HCT116 (cell line): ENCODE measurements at regions of chr4 and their contacts with region 1.

Region 1: DNA sequence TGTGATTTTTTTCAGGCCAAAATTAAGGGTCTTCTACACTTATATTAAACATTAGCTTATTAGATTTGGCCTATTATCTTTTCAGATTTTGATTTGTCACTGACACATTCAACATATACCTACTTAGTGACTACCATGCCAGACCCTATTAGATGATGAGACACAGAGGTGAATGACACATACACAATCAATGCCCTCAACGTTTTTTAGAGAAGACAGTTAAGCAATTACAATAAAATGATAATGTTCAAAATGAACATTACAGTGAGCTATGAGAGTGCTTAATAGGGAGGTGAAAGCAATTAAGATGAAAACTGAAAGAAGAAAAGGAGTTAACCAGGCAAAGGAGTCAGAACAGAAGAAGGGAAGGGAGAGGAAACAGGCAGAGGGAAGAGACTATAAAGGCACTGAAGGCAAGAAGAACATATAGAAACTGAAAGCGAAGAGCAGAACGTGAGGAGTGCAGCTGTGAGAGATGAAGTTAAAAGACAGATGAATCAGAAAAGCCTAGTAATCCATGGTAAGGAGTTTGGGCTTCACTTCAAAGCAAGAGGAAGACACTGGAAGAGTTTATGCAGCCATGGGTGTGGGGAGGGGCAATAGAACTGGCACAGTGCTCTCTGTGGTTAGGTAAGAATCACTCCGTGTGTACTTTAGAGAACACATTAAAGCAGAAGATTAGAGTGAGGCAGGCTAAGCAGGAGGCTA is 119.0 kb downstream of the REELD1 start:
- DNase-seq: no peak
- ATAC-seq: peak; percentile 79
- H3K4me3 ChIP-seq: no peak overlapping the region
- H3K27ac ChIP-seq: no peak overlapping the region
- H3K4me1 ChIP-seq: peaks cover 27 to 45% of the 10 kb centered on the region in 2 experiments
- H3K27me3 ChIP-seq: no peaks in the 10 kb centered on the region
- CTCF ChIP-seq: no peak
- POLR2A ChIP-seq: no peak
- RAD21 ChIP-seq: no peak

Region 2: GRCh38 chr4:145216535-145216934 is 1116.8 kb before region 1 on chr4:
- CTCF ChIA-PET with region 1: no interaction called
- POLR2A ChIA-PET with region 1: no interaction called
- RAD21 ChIA-PET with region 1: no interaction called
- intact Hi-C with region 1: loop called (anchors 10 kb)
- DNase-seq: peak; percentile 24
- ATAC-seq: peak; percentile 46; the same call in 1 of the 2 replicates
- H3K4me3 ChIP-seq: no peak overlapping the region
- H3K27ac ChIP-seq: no peak overlapping the region
- H3K4me1 ChIP-seq: no peaks in the 10 kb centered on the region
- H3K27me3 ChIP-seq: no peaks in the 10 kb centered on the region
- CTCF ChIP-seq: peak; percentile 49 to 75 (median 72); a peak in 5 of 6 replicates
- POLR2A ChIP-seq: no peak
- RAD21 ChIP-seq: peak; percentile 87

Region 3: DNA sequence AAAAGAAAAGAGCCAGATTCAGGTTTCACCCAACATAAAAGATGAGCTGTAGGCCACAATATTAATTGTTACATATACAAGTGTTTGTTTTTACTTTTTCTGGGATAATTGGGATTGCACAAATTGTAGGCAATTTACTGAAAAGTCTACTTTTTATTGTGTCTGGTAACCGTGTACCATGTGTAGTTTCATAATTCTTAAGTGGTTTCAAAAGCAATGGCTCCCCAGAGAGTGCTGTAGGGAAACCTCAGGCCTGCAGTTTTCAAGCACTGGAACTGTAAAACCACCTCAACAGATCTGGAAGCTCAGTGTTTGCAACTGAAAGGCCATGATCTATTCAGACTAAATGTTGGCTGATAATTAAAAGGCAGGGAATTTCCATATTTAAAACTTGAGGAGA is 768.0 kb before region 1 on chr4:
- CTCF ChIA-PET with region 1: no interaction called
- POLR2A ChIA-PET with region 1: no interaction called
- RAD21 ChIA-PET with region 1: no interaction called
- intact Hi-C with region 1: no loop called
- DNase-seq: no peak
- ATAC-seq: no peak
- H3K4me3 ChIP-seq: no peak overlapping the region
- H3K27ac ChIP-seq: no peak overlapping the region
- H3K4me1 ChIP-seq: no peaks in the 10 kb centered on the region
- H3K27me3 ChIP-seq: no peaks in the 10 kb centered on the region
- CTCF ChIP-seq: no peak
- POLR2A ChIP-seq: no peak
- RAD21 ChIP-seq: no peak

Region 4: GRCh38 chr4:145956288-145956890 is 377.0 kb before region 1 on chr4:
- CTCF ChIA-PET with region 1: no interaction called
- POLR2A ChIA-PET with region 1: no interaction called
- RAD21 ChIA-PET with region 1: no interaction called
- intact Hi-C with region 1: loop called (anchors 10 kb)
- DNase-seq: no peak
- ATAC-seq: 0 out of 2 replicates have a peak, but pooled peaks have one; percentile 29
- H3K4me3 ChIP-seq: no peak overlapping the region
- H3K27ac ChIP-seq: no peak overlapping the region
- H3K4me1 ChIP-seq: peaks cover 15 to 35% of the 10 kb centered on the region in 2 experiments
- H3K27me3 ChIP-seq: no peaks in the 10 kb centered on the region
- CTCF ChIP-seq: peak; percentile 28 to 87 (median 85); a peak in 5 of 6 replicates
- POLR2A ChIP-seq: no peak
- RAD21 ChIP-seq: peak; percentile 37

Region 5: GRCh38 chr4:145984563-145984962 is 348.8 kb before region 1 on chr4:
- CTCF ChIA-PET with region 1: no interaction called
- POLR2A ChIA-PET with region 1: no interaction called
- RAD21 ChIA-PET with region 1: no interaction called
- intact Hi-C with region 1: no loop called
- DNase-seq: no peak
- ATAC-seq: no peak
- H3K4me3 ChIP-seq: no peak overlapping the region
- H3K27ac ChIP-seq: no peak overlapping the region
- H3K4me1 ChIP-seq: no peaks in the 10 kb centered on the region
- H3K27me3 ChIP-seq: no peaks in the 10 kb centered on the region
- CTCF ChIP-seq: no peak
- POLR2A ChIP-seq: no peak
- RAD21 ChIP-seq: no peak

Region 6: GRCh38 chr4:146095091-146095690 is 238.2 kb before region 1 on chr4:
- CTCF ChIA-PET with region 1: no interaction called
- POLR2A ChIA-PET with region 1: no interaction called
- RAD21 ChIA-PET with region 1: no interaction called
- intact Hi-C with region 1: loop called (anchors 10 kb)
- DNase-seq: peak; percentile 57
- ATAC-seq: peak; percentile 66; the same call in 1 of the 2 replicates
- H3K4me3 ChIP-seq: no peak overlapping the region
- H3K27ac ChIP-seq: no peak overlapping the region
- H3K4me1 ChIP-seq: no peaks in the 10 kb centered on the region
- H3K27me3 ChIP-seq: no peaks in the 10 kb centered on the region
- CTCF ChIP-seq: peak; percentile 51 to 92 (median 79); a peak in 5 of 6 replicates
- POLR2A ChIP-seq: no peak
- RAD21 ChIP-seq: peak; percentile 61

Region 7: DNA sequence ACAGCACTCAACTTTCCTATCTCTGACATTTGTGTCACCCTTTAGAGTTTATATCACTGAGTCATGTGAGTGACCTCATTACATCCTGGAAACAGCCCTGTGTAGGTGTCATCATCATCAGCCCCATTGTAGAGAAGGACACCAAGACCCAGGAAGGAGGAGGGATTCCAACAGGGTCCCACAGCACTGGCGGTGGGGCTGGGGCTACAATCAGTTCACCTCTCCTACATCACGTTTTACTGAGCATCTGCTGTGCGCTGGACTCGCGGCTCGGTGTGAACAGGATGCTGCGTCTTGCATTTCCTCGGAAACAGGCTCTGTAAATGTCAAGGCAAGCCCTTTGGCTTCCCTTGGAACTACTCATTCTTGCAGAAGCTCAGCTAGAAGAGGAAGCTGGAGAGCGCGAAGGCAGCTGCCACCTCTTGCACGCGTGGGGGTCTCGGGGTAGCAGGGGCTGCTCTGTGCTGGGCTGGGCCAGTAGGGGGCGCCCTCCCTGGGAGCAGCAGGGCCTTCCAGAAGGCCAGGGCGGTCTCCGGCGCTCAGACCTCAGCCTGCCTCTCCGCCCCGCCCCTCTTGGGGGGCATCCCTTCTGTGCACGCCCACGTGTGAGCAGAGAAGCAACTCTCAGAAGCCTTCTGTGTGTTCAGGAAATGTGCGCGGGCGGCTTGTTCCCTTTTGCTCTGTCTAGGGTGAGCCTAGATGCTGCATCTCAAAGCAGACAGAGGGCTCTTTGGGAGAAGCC is 90.0 kb before region 1 on chr4:
- CTCF ChIA-PET with region 1: no interaction called
- POLR2A ChIA-PET with region 1: no interaction called
- RAD21 ChIA-PET with region 1: no interaction called
- intact Hi-C with region 1: loop called (anchors 2 kb)
- DNase-seq: no peak
- ATAC-seq: no peak
- H3K4me3 ChIP-seq: no peak overlapping the region
- H3K27ac ChIP-seq: no peak overlapping the region
- H3K4me1 ChIP-seq: peaks cover 12 to 31% of the 10 kb centered on the region in 2 experiments
- H3K27me3 ChIP-seq: no peaks in the 10 kb centered on the region
- CTCF ChIP-seq: peak in 2 of 3 experiments; percentile 81 to 85; a peak in 4 of 6 replicates
- POLR2A ChIP-seq: no peak
- RAD21 ChIP-seq: no peak